Activated CD4-positive, alpha-beta T cell treated with anti-CD3 and anti-CD28 coated beads, Interleukin-2, amount 10 ng/mL, durations not matched to agents 24 days and 14 days (primary cell): ENCODE measurements at regions of chr1 and their contacts with region 1.

Region 1: GRCh38 chr1:240149484-240150094 is 57.9 kb downstream of the FMN2 start:
- DNase-seq: peak; percentile 57
- H3K4me3 Mint-ChIP-seq: no peak overlapping the region
- H3K27ac Mint-ChIP-seq: no peak overlapping the region
- H3K4me1 Mint-ChIP-seq: no peaks in the 10 kb centered on the region
- H3K27me3 Mint-ChIP-seq: no peaks in the 10 kb centered on the region

Region 2: DNA sequence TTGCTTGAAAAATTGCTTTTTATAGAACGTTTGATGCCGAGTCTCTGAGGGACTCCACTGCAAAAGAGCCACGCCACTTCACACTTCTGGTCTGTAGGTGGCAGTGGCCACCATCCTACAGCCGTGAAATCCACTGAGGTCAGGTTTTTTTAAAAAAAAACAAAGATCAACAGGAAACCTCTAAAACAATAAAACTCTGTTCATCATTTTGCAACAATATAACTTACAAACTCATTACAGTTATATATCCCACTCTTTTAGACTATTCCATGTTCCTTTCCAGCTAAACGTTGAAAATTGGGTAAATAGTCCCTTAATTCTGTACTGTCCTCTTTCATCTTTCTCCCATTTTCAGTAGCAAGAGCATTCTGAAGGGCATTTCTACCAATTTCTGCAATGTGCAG is 122.5 kb before region 1 on chr1:
- intact Hi-C with region 1: loop called (anchors 2 kb)
- DNase-seq: peak; percentile 67
- H3K4me3 Mint-ChIP-seq: no peak overlapping the region
- H3K27ac Mint-ChIP-seq: no peak overlapping the region
- H3K4me1 Mint-ChIP-seq: no peaks in the 10 kb centered on the region
- H3K27me3 Mint-ChIP-seq: no peaks in the 10 kb centered on the region

Region 3: GRCh38 chr1:240074908-240075307 is 74.7 kb before region 1 on chr1:
- intact Hi-C with region 1: no loop called
- DNase-seq: no peak
- H3K4me3 Mint-ChIP-seq: no peak overlapping the region
- H3K27ac Mint-ChIP-seq: no peak overlapping the region
- H3K4me1 Mint-ChIP-seq: no peaks in the 10 kb centered on the region
- H3K27me3 Mint-ChIP-seq: no peaks in the 10 kb centered on the region